Mammary epithelial cell (primary cell): ENCODE measurements at regions of chr4 and their contacts with region 1.

Region 1: GRCh38 chr4:69054578-69055200 is 41.6 kb upstream of the UGT2B7 start:
- DNase-seq: peak; percentile 71
- H3K4me3 ChIP-seq: no peak overlapping the region
- H3K27ac ChIP-seq: peak overlapping the region; percentile 57
- H3K4me1 ChIP-seq: peaks cover 5% of the 10 kb centered on the region
- H3K27me3 ChIP-seq: no peaks in the 10 kb centered on the region
- CTCF ChIP-seq: no peak

Region 2: DNA sequence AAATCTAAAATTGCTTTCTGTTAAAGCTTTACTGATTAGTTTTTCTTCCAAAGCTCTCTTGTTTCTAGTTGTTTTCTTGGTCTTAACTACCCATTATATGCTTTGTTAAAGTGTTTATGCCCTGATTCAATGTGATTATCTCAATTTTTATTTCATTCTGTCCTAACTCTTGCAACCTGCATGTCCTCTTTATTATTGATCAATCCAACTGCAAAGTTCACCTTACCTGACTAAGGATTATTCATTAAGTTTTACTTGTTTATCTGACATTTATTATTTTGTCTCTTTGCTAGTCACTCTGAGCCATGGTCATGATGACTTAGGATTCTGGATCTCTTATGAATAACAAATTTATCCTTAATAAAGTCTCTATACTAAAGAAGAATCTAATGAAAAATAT is 223.0 kb before region 1 on chr4:
- CTCF ChIA-PET with region 1: no interaction called
- dilution Hi-C with region 1: no loop called
- in situ Hi-C with region 1: no loop called
- intact Hi-C with region 1: no loop called
- DNase-seq: no peak
- H3K4me3 ChIP-seq: no peak overlapping the region
- H3K27ac ChIP-seq: no peak overlapping the region
- H3K4me1 ChIP-seq: no peaks in the 10 kb centered on the region
- H3K27me3 ChIP-seq: no peaks in the 10 kb centered on the region
- CTCF ChIP-seq: no peak

Region 3: DNA sequence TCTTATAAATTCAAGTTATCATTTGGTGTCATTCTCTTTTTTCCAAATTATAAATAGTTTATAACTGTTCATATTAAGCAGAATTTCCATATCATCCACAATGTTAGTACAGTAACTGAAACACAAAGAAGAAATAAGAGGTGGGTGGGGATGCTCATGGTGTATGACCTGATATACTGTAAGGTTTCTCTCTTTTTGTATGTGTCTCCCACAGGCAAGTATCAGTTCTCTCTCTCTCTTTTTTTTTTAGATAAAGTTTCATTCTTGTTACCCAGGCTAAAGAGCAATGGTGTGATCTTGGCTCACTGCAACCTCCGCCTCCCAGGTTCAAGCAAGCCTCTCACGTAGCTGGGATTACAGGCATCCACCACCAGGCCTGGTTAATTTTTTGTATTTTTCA is 59.4 kb before region 1 on chr4:
- CTCF ChIA-PET with region 1: no interaction called
- dilution Hi-C with region 1: no loop called
- in situ Hi-C with region 1: no loop called
- intact Hi-C with region 1: no loop called
- DNase-seq: no peak
- H3K4me3 ChIP-seq: no peak overlapping the region
- H3K27ac ChIP-seq: no peak overlapping the region
- H3K4me1 ChIP-seq: no peaks in the 10 kb centered on the region
- H3K27me3 ChIP-seq: no peaks in the 10 kb centered on the region
- CTCF ChIP-seq: no peak

Region 4: GRCh38 chr4:69025191-69025998 is 29.3 kb before region 1 on chr4:
- CTCF ChIA-PET with region 1: no interaction called
- dilution Hi-C with region 1: no loop called
- in situ Hi-C with region 1: no loop called
- intact Hi-C with region 1: no loop called
- DNase-seq: no peak
- H3K4me3 ChIP-seq: no peak overlapping the region
- H3K27ac ChIP-seq: no peak overlapping the region
- H3K4me1 ChIP-seq: no peaks in the 10 kb centered on the region
- H3K27me3 ChIP-seq: no peaks in the 10 kb centered on the region
- CTCF ChIP-seq: peak; percentile 18 to 23

Region 5: GRCh38 chr4:69066945-69067344 is 12.3 kb after region 1 on chr4:
- CTCF ChIA-PET with region 1: no interaction called
- dilution Hi-C with region 1: no loop called
- in situ Hi-C with region 1: no loop called
- intact Hi-C with region 1: loop called (anchors 1 kb)
- DNase-seq: peak; percentile 65
- H3K4me3 ChIP-seq: no peak overlapping the region
- H3K27ac ChIP-seq: no peak overlapping the region
- H3K4me1 ChIP-seq: peaks cover 10% of the 10 kb centered on the region
- H3K27me3 ChIP-seq: no peaks in the 10 kb centered on the region
- CTCF ChIP-seq: no peak